SK-N-SH (cell line): ENCODE measurements at regions of chr12 and their contacts with region 1.

Region 1: GRCh38 chr12:70733385-70733784 is 96.2 kb upstream of the PTPRB start:
- DNase-seq: peak; percentile 69
- H3K4me3 ChIP-seq: no peak overlapping the region; a peak in 1 of 4 replicates
- H3K27ac ChIP-seq: peak overlapping the region in 1 of 2 experiments; percentile 62; a peak in 2 of 4 replicates
- H3K4me1 ChIP-seq: peaks cover 0 to 3% of the 10 kb centered on the region in 2 experiments; a peak in 2 of 4 replicates
- H3K27me3 ChIP-seq: no peaks in the 10 kb centered on the region
- CTCF ChIP-seq: peak; percentile 75
- EP300 ChIP-seq: no peak
- RAD21 ChIP-seq: peak; percentile 92

Region 2: DNA sequence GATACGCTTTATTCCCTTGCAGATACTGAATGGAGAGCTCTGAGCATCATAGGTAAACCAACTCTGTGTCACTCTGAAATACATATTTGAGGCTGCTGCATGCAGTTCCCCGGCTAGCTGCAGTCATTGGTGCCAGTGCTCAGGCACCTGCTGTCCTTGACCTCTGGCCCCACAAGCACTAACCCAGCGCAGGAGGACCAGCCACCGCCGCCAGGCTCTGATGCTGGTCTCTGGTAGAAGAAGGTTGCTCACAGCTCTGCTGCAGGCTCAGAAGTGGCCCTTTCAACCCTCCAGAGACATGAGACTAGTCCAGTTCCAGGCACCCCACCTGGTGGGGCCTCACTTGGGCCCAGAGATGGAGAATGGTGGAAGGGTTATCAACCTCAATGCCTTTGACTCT is 61.7 kb before region 1 on chr12:
- CTCF ChIA-PET with region 1: no interaction called
- POLR2A ChIA-PET with region 1: no interaction called
- DNase-seq: no peak
- H3K4me3 ChIP-seq: no peak overlapping the region
- H3K27ac ChIP-seq: no peak overlapping the region
- H3K4me1 ChIP-seq: no peaks in the 10 kb centered on the region; a peak in 1 of 4 replicates
- H3K27me3 ChIP-seq: no peaks in the 10 kb centered on the region
- CTCF ChIP-seq: no peak
- EP300 ChIP-seq: no peak
- RAD21 ChIP-seq: no peak

Region 3: GRCh38 chr12:70719672-70720420 is 13.5 kb before region 1 on chr12:
- CTCF ChIA-PET with region 1: interaction called, 11 read pairs
- POLR2A ChIA-PET with region 1: no interaction called
- DNase-seq: peak; percentile 48
- H3K4me3 ChIP-seq: peak overlapping the region; percentile 9 to 53; a peak in 2 of 4 replicates
- H3K27ac ChIP-seq: no peak overlapping the region
- H3K4me1 ChIP-seq: peaks cover 0 to 2% of the 10 kb centered on the region in 2 experiments; a peak in 2 of 4 replicates
- H3K27me3 ChIP-seq: no peaks in the 10 kb centered on the region
- CTCF ChIP-seq: peak; percentile 99
- EP300 ChIP-seq: no peak
- RAD21 ChIP-seq: peak; percentile 81

Region 4: DNA sequence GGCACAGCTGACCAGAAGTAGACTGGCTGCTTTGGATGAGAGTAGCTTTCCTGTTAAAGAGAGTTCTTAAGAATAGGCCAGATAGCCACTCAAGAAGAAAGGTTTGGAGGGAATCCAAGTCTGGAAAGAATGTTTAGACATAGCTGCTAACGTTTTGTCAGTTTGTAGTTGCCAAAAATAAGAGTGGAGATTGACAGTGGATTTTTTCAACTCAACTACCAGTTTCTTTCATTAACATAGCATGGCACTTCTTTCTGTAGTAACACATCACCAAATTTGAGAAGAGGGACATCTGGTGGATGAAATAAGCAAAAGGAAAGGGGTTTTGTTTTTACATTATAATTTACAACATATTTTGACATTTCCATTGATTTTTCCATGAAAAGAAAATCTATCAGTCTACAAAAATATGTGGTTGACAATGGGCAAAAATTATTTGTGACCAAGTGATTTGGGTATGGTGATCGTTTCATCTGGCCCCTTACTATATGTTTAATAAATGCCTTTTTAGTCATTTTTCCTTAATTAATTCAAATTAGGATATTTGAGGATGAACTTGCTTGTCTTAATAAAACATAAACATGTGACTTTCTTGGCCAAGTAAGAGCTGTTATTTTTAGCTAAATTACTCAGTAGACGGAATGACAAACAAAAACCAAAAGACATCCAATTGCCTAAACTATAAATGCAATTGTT is 116.0 kb after region 1 on chr12:
- CTCF ChIA-PET with region 1: interaction called, 22 read pairs
- POLR2A ChIA-PET with region 1: no interaction called
- DNase-seq: peak; percentile 5
- H3K4me3 ChIP-seq: no peak overlapping the region
- H3K27ac ChIP-seq: no peak overlapping the region; a peak in 1 of 4 replicates
- H3K4me1 ChIP-seq: peaks cover 0 to 3% of the 10 kb centered on the region in 2 experiments; a peak in 3 of 4 replicates
- H3K27me3 ChIP-seq: no peaks in the 10 kb centered on the region
- CTCF ChIP-seq: peak; percentile 66
- EP300 ChIP-seq: no peak
- RAD21 ChIP-seq: peak; percentile 60

Region 5: DNA sequence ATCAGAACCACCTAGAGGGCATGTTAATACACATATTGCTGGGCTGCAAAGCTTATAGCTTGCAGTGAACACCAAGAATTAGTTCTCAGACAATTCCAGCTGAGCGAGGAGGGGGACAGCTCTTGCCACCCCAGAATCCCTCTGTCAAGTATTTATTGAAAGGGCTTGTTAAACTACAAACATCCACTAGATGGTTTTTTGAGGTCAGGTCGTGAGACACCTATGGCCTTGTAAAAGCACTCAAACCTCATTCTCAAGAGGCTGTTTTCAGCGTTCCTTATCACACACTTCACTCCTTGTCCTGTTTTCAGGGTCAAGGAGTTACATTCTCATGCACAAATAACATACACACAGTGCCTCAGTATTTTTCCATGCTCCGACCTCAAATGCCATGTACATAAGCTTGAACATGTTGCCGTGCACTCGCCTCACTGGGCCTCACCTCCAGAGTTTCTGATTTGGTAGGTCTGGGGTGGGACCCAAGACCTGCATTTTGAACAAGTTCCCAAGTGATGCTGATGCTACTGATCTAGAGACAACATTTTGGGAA is 286.0 kb after region 1 on chr12:
- CTCF ChIA-PET with region 1: interaction called, 26 read pairs
- POLR2A ChIA-PET with region 1: no interaction called
- DNase-seq: no peak
- H3K4me3 ChIP-seq: no peak overlapping the region
- H3K27ac ChIP-seq: no peak overlapping the region
- H3K4me1 ChIP-seq: no peaks in the 10 kb centered on the region
- H3K27me3 ChIP-seq: no peaks in the 10 kb centered on the region
- CTCF ChIP-seq: no peak
- EP300 ChIP-seq: no peak
- RAD21 ChIP-seq: no peak